ENCODE measurements at regions of chr9 and their contacts with region 1.

Region 1: GRCh38 chr9:127943731-127944144 is 6.1 kb upstream of the DPM2 start:
- DNase-seq: peak in 3 of 4 donors; percentile 75 to 96 (median 82)
- ATAC-seq: peak; percentile 91
- H3K4me3 ChIP-seq: no peak overlapping the region
- H3K27ac ChIP-seq: no peak overlapping the region
- H3K4me1 ChIP-seq: peaks cover 0 to 18% of the 10 kb centered on the region in 2 donors
- H3K27me3 ChIP-seq: no peaks in the 10 kb centered on the region
- CTCF ChIP-seq: peak; percentile 87 to 93

Region 2: DNA sequence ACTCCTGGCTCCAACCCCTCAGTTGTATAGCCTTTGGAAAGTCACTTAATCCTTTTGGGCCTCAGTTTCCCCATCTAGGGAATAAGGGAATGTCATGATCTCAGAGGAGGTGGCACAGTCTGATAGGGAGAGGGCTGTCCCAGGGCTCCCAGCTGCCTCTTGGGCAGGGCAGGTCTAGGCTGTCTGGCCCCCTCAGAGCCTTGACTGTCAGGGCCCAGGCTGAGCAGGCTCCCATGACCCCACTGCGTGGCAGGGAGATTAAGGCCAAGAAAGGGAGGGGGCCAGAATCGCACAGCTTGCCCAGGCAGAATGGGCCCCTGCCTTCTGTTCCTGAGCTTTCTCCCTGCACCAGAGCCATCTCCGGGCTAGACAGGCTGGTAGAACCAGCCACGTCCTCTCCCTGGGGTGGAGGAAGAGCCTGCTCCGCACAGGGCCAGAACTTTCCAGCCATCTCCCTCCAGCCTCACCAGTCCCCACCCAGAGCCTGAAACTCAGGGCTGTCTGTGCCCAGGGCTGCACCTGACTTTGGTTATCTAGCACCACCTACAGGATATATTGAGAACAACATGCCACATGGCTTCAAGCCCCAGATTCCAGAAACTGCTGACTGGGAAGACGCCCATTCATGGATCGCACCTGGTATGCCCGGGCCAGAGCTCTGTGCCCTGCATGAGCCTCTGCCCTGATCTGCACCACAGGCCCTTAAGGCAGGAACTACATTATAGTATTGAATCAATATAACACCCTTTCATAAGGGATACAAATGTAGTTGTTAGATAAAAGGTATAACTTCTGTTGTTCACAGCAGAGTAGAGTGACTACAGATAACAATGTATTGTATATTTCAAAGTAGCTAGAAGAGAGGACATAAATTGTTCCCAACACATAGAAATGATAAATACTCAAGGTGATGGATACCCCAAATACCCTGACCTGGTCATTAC is 91.4 kb after region 1 on chr9:
- intact Hi-C with region 1: loop called (anchors 2 to 10 kb)
- DNase-seq: peak; percentile 28 to 79 (median 70)
- ATAC-seq: peak; percentile 99
- H3K4me3 ChIP-seq: no peak overlapping the region
- H3K27ac ChIP-seq: no peak overlapping the region
- H3K4me1 ChIP-seq: peaks cover 0 to 2% of the 10 kb centered on the region in 2 donors
- H3K27me3 ChIP-seq: no peaks in the 10 kb centered on the region
- CTCF ChIP-seq: peak; percentile 76 to 93

Region 3: DNA sequence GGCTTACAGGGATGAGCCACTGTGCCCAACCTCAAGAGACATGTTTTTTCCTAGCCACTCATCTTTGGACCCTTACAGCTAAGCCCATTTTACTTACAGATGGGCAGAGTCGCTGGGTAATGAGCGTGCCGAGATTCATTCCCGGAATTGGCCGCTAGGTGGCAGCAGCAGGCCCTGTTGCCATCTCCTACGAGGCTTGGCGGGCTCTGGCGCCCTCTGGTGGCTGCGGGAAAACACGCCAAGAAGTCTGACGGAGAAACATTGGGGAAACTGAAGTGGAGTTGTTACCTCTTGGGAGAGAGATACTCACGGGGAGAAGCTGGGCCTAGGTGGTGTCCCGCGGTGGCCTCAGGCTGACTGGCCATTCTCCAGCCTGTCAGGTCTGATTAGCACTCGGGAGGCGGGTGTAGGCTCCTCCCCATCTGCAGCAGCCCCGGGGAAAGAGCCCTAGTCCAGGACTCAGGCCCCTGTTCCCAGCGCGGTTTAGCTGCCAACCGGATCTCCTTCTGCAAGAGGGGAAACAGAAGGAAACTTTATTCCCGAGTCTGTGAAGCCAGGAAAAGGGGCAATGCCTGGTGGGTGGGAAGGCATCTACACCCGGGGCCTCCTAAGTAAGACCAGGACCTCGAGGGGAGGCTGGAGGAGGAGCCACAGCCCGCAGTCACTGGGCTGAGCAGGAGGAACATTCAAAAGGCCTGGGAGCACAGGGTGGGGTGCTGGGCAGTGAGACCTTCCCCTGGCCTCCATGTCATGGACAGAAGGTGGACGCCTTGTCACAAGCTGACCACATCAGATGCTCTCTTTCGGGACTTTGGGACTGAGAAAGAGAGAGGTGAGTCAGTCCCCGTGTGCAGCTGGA is 174.1 kb after region 1 on chr9:
- intact Hi-C with region 1: loop called in 1 of 2 experiments (anchors 10 kb)
- DNase-seq: peak; percentile 88 to 99 (median 93)
- ATAC-seq: peak; percentile 95
- H3K4me3 ChIP-seq: no peak overlapping the region
- H3K27ac ChIP-seq: no peak overlapping the region
- H3K4me1 ChIP-seq: peaks cover 4 to 18% of the 10 kb centered on the region in 2 donors
- H3K27me3 ChIP-seq: no peaks in the 10 kb centered on the region
- CTCF ChIP-seq: peak; percentile 100

Measured in left lung (tissue), 14 donors.